Right cardiac atrium (tissue), 5 donors: ENCODE measurements at regions of chr19 and their contacts with region 1.

Region 1: DNA sequence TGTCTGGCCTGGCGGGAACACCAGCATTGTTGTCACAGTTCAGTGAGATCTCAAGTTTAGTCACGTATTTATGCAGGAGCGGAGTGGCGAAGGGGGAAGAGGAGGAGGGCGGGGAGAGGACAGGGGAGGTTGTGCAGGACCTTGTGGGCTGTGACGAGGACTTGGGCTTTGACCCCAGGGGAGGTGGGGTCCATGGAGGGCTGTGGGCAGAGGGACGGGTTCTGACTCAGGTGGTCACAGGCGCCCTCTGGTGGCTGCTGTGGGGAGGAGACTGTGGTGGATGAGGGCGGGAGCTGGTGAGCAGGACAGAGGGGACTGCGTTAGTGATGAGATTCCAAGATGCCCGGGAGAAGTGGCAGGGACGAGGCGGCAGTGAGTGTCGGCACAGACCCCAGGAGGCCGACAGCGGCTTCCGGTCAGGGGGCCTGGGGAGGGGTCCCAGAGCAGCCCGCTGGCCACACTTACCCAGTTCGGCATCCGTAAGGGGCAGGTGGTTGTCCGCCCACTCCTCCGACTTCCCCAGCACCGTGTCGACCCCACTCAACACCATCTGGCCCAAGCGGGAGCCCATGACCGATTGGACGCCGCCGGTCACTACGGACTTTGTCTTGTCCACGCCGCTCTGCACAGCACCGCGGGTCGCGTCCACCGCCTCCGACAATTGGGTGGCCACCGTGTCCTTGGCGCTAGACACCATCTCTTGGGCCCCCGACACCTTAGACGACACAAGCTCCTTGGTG is 15.7 kb downstream of the PLIN3 start:
- DNase-seq: peak; percentile 72 to 91 (median 88)
- ATAC-seq: peak; percentile 80 to 81
- H3K4me3 ChIP-seq: no peak overlapping the region
- H3K27ac ChIP-seq: no peak overlapping the region
- H3K4me1 ChIP-seq: no peaks in the 10 kb centered on the region
- H3K27me3 ChIP-seq: no peaks in the 10 kb centered on the region

Region 2: GRCh38 chr19:4791170-4792018 is 60.3 kb before region 1 on chr19 and contains the start of gene FEM1A:
- intact Hi-C with region 1: no loop called
- DNase-seq: peak; percentile 99 to 100 (median 100)
- ATAC-seq: peak; percentile 100
- H3K4me3 ChIP-seq: peak within 1 kb of the TSS; percentile 66
- H3K27ac ChIP-seq: peak within 1 kb of the TSS; percentile 65
- H3K4me1 ChIP-seq: no peaks in the 10 kb centered on the region
- H3K27me3 ChIP-seq: no peaks in the 10 kb centered on the region
- total RNA-seq, gene FEM1A: 23.4 to 28.3 (median 27.9) TPM

Region 3: DNA sequence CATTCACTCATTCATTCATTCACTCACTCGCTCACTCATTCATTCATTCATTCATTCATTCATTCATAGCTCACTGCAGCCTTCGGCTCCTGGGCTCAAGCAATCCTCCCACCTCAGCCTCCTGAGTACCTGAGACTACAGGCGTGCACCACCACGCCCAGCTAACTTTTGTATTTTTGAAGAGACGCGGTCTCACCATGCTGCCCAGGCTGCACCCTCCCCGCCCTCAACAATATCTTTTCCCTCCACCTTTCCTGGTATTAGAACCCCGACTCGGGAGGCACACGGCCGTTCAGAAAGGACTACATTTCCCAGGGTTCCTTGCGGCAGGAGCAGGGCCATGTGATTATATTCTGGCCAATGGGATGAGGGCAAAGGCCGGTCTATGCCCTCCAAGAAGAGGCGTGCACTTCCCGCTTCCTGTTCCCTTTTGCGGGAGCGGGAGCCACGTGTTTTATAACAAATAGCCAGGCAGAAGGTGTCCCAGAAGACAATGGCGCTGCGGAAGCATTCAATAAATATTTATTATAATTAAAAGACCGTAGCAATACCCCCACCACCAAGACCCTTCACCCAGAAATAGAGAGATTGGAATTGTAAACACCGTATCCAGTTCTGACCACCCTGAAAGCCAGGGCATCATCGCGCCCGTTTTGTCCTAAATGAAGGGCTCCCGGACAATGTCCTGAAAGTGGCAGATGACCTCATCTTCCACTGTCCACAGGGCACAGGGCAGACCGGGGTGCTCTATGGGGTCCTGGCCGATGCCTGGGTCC is 36.1 kb before region 1 on chr19:
- intact Hi-C with region 1: loop called in 2 of 4 experiments (anchors 5 kb)
- DNase-seq: peak; percentile 92 to 94 (median 92)
- ATAC-seq: peak; percentile 93 to 95
- H3K4me3 ChIP-seq: no peak overlapping the region
- H3K27ac ChIP-seq: no peak overlapping the region
- H3K4me1 ChIP-seq: no peaks in the 10 kb centered on the region
- H3K27me3 ChIP-seq: no peaks in the 10 kb centered on the region